ENCODE measurements at regions of chr12 and their contacts with region 1.

Region 1: DNA sequence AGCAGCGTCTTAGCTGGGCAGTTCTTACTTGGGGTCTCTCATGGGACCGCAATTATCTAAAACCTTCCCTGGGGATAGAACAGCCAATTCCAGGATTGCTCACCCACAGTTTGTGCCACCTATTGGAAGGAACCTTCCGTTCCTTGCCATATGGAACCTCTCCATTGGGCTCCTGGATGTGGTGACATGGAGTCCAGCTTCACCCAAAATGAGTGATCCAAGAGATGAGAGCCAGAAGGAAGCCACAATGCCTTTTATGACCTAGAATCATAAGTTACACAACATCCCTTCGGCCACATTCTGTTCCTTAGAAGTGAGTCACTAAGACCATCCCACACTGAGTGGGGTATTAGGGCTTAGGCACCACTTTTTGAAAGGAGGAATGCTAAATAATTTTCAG is 164.4 kb downstream of the FBXL14 start:
- DNase-seq: peak; percentile 52
- H3K4me3 ChIP-seq: no peak overlapping the region
- H3K27ac ChIP-seq: no peak overlapping the region
- H3K4me1 ChIP-seq: peaks cover 16% of the 10 kb centered on the region
- H3K27me3 ChIP-seq: no peaks in the 10 kb centered on the region
- CTCF ChIP-seq: no peak

Region 2: DNA sequence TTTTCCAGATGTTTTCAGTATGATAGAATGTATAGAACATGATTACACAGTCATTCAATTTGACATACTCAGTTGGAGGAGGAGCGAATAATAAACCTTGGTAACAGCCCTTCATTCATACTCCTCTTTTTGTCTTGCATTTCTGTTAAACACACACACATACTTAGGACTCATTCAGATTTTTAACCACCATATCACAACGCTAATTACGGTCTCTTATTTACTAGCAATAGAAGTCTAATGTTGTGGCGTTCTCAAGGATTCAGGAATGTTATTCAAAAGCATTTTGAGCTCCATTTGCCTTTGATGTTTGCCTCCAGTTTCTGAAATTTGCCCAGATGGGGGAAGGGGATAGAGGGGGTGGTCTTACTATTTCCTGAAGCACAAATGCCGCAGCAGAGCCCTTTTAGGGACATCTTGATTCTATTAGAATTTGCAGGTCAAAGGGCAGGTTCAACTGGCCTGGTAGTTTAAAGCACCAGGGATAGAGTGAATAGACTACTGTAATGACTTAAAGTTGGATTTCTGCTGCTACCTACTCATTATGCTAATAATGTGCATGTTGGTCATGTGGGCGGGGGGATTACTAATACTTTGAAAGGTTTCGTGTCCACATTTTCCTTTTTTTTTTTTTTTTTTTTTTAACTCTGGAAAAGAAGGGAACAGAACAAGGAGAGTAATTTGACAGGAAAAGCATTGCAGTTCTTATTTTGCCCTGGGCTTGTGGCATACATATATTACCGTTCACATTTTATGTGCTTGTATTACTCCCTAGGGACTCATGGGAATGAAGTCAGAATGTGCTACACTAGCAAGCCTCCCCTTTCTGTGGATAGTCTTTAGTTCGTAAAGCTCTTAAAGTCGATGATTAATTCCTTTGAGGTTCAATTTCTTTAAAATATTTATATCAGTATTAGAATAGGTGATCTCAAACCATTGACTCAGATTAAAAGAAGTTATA is 62.4 kb before region 1 on chr12:
- CTCF ChIA-PET with region 1: no interaction called
- dilution Hi-C with region 1: loop called (anchors 5 kb)
- in situ Hi-C with region 1: no loop called
- intact Hi-C with region 1: no loop called
- DNase-seq: no peak
- H3K4me3 ChIP-seq: no peak overlapping the region
- H3K27ac ChIP-seq: no peak overlapping the region
- H3K4me1 ChIP-seq: no peaks in the 10 kb centered on the region
- H3K27me3 ChIP-seq: no peaks in the 10 kb centered on the region
- CTCF ChIP-seq: no peak